B cell (primary cell): ENCODE measurements at regions of chr17 and their contacts with region 1.

Region 1: DNA sequence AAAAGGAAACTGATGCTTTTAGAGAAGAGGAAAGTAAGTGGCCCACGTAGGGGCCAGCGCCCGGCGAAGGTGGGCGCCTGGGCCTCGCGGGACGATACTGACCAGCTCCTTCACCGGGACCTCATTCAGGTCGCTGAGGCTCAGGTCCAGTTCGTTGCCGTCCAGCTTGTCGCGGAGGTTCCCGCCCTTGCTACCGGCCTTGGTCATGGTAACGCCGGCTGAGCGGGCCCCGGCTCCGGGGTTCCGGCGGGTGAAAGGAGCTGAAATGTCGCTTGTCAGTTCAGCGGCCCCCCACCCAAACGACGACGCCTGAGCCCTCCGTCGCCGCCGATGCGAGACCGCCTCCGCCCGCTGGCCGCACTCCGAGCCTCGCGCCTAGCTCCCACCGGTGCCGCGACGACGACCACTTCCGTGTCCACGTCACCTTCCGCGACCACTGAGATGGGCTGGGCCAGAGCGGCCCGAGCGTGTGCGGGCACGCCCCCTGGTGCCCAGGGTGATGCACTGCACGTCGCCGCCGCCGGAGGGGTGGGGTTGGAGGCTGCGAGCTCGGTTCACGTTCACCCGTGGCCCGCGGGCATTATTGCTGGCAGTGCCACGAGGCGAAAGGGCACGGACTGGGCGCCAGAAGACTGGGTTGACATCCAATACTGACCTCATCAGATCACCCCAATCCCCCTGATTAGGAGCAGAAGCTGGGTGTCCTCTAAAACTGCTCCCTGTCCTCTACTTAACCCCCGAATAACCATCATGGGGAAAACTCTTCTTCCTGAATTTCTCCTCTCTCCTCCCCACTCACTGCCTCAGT is at the start of gene LRRC59:
- DNase-seq: peak; percentile 95
- ATAC-seq: peak; percentile 100
- H3K4me3 ChIP-seq: peak within 1 kb of the TSS; percentile 62 to 95 (median 92)
- H3K4me3 Mint-ChIP-seq: peak within 1 kb of the TSS; percentile 89
- H3K27ac ChIP-seq: peak within 1 kb of the TSS; percentile 77 to 89
- H3K27ac Mint-ChIP-seq: peak within 1 kb of the TSS; percentile 91
- H3K4me1 ChIP-seq: peaks cover 21 to 25% of the 10 kb centered on the region in 2 donors
- H3K4me1 Mint-ChIP-seq: peaks cover 31% of the 10 kb centered on the region
- H3K27me3 ChIP-seq: no peaks in the 10 kb centered on the region
- H3K27me3 Mint-ChIP-seq: no peaks in the 10 kb centered on the region
- CTCF ChIP-seq: peak; percentile 99
- total RNA-seq, gene LRRC59: 29.5 and 31.2 TPM in 2 replicates

Region 2: GRCh38 chr17:50345432-50346312 is 51.6 kb before region 1 on chr17 and contains the start of gene XYLT2:
- CTCF ChIA-PET with region 1: interaction called, 4 read pairs
- POLR2A ChIA-PET with region 1: interaction called, 4 read pairs
- intact Hi-C with region 1: loop called (anchors 2 kb)
- DNase-seq: peak; percentile 95
- ATAC-seq: peak; percentile 95
- H3K4me3 ChIP-seq: peak within 1 kb of the TSS; percentile 9 to 80 (median 75)
- H3K4me3 Mint-ChIP-seq: peak within 1 kb of the TSS; percentile 92
- H3K27ac ChIP-seq: peak within 1 kb of the TSS; percentile 18 to 54
- H3K27ac Mint-ChIP-seq: peak within 1 kb of the TSS; percentile 91
- H3K4me1 ChIP-seq: peaks cover 10 to 21% of the 10 kb centered on the region in 2 donors
- H3K4me1 Mint-ChIP-seq: peaks cover 32% of the 10 kb centered on the region
- H3K27me3 ChIP-seq: no peaks in the 10 kb centered on the region
- H3K27me3 Mint-ChIP-seq: peaks cover 4% of the 10 kb centered on the region
- CTCF ChIP-seq: no peak
- total RNA-seq, gene XYLT2: 29.9 and 30.3 TPM in 2 replicates

Region 3: DNA sequence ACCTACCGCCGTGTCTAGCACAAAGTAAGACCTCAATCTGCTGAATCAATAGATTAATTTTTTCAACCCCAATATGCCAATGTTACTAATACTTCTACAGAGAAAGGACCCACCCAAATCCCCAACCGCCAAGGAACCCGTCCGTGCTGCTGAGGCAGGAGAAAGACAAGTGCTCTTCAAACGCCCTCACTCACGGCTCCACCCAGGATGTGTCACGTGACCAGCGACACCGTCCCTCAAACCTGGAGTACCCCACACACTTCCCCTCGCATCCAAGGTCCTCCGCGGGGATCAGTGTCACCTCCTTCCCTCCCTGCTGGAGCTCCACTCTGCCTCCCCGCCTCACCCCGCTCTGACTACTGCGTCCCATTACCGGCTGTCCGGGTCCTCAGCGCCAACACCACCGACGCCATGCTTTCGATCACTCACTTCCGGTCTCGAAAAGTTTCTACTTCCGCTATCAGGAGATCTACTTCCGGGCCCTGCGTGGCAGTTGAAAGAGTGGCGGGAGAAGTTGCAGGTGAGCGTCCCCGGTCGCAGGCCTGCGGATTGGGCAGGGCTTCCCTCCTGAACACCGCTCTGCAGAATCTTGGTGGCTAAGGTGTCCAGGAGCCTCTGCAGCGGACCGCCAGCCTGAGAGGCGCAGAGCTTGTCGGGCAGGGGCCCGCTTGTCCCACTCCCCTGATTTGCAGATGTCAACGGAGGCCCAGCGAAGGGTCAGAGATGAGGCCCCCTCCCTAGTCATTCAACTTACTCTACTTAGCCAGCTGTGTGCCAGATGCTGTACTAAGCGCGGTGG is 24.4 kb before region 1 on chr17 and contains the starts of genes EME1 and MRPL27:
- CTCF ChIA-PET with region 1: interaction called, 16 read pairs
- POLR2A ChIA-PET with region 1: interaction called, 6 read pairs
- intact Hi-C with region 1: loop called (anchors 1 kb)
- DNase-seq: peak; percentile 96
- ATAC-seq: peak; percentile 88
- H3K4me3 ChIP-seq: peak within 1 kb of the TSS; percentile 65 to 85 (median 81)
- H3K4me3 Mint-ChIP-seq: peak within 1 kb of the TSS; percentile 100
- H3K27ac ChIP-seq: peak within 1 kb of the TSS; percentile 91 to 96
- H3K27ac Mint-ChIP-seq: peak within 1 kb of the TSS; percentile 100
- H3K4me1 ChIP-seq: peaks cover 14 to 19% of the 10 kb centered on the region in 2 donors
- H3K4me1 Mint-ChIP-seq: peaks cover 23% of the 10 kb centered on the region
- H3K27me3 ChIP-seq: no peaks in the 10 kb centered on the region
- H3K27me3 Mint-ChIP-seq: no peaks in the 10 kb centered on the region
- CTCF ChIP-seq: no peak
- total RNA-seq, gene EME1: 2.3 and 3.4 TPM in 2 replicates
- total RNA-seq, gene MRPL27: 33.5 and 40.2 TPM in 2 replicates

Region 4: GRCh38 chr17:50468409-50469207 is 71.3 kb after region 1 on chr17 and contains the start of gene CHAD:
- CTCF ChIA-PET with region 1: interaction called, 13 read pairs
- POLR2A ChIA-PET with region 1: interaction called, 3 read pairs
- intact Hi-C with region 1: no loop called
- DNase-seq: peak; percentile 37
- ATAC-seq: peak; percentile 56
- H3K4me3 ChIP-seq: peak within 1 kb of the TSS in 4 of 5 experiments; percentile 23 to 59 (median 38)
- H3K4me3 Mint-ChIP-seq: peak within 1 kb of the TSS; percentile 77
- H3K27ac ChIP-seq: no peak within 1 kb of the TSS
- H3K27ac Mint-ChIP-seq: peak within 1 kb of the TSS; percentile 50
- H3K4me1 ChIP-seq: peaks cover 14 to 43% of the 10 kb centered on the region in 2 donors
- H3K4me1 Mint-ChIP-seq: peaks cover 44% of the 10 kb centered on the region
- H3K27me3 ChIP-seq: peaks cover 0 to 29% (median 10%) of the 10 kb centered on the region in 4 experiments
- H3K27me3 Mint-ChIP-seq: peaks cover 5% of the 10 kb centered on the region
- CTCF ChIP-seq: no peak
- total RNA-seq, gene CHAD: 3.5 and 3.9 TPM in 2 replicates

Region 5: GRCh38 chr17:50691545-50692447 is 294.5 kb after region 1 on chr17:
- CTCF ChIA-PET with region 1: no interaction called
- POLR2A ChIA-PET with region 1: no interaction called
- intact Hi-C with region 1: no loop called
- DNase-seq: no peak
- ATAC-seq: no peak
- H3K4me3 ChIP-seq: no peak overlapping the region
- H3K4me3 Mint-ChIP-seq: no peak overlapping the region
- H3K27ac ChIP-seq: no peak overlapping the region
- H3K27ac Mint-ChIP-seq: no peak overlapping the region
- H3K4me1 ChIP-seq: no peaks in the 10 kb centered on the region
- H3K4me1 Mint-ChIP-seq: no peaks in the 10 kb centered on the region
- H3K27me3 ChIP-seq: no peaks in the 10 kb centered on the region
- H3K27me3 Mint-ChIP-seq: no peaks in the 10 kb centered on the region
- CTCF ChIP-seq: no peak

Region 6: GRCh38 chr17:50783193-50783660 is 385.9 kb after region 1 on chr17:
- CTCF ChIA-PET with region 1: no interaction called
- POLR2A ChIA-PET with region 1: no interaction called
- intact Hi-C with region 1: no loop called
- DNase-seq: peak; percentile 81
- ATAC-seq: peak; percentile 98
- H3K4me3 ChIP-seq: no peak overlapping the region
- H3K4me3 Mint-ChIP-seq: no peak overlapping the region
- H3K27ac ChIP-seq: no peak overlapping the region
- H3K27ac Mint-ChIP-seq: no peak overlapping the region
- H3K4me1 ChIP-seq: peaks cover 0 to 5% of the 10 kb centered on the region in 2 donors
- H3K4me1 Mint-ChIP-seq: peaks cover 7% of the 10 kb centered on the region
- H3K27me3 ChIP-seq: peaks cover 0 to 3% (median 1%) of the 10 kb centered on the region in 4 experiments
- H3K27me3 Mint-ChIP-seq: peaks cover 16% of the 10 kb centered on the region
- CTCF ChIP-seq: peak; percentile 96